Activated CD4-positive, alpha-beta memory T cell treated with anti-CD3 and anti-CD28 coated beads, Interleukin-2, amount 10 ng/mL, durations not matched to agents 7 days and 5 days (primary cell): ENCODE measurements at regions of chr13 and their contacts with region 1.

Region 1: DNA sequence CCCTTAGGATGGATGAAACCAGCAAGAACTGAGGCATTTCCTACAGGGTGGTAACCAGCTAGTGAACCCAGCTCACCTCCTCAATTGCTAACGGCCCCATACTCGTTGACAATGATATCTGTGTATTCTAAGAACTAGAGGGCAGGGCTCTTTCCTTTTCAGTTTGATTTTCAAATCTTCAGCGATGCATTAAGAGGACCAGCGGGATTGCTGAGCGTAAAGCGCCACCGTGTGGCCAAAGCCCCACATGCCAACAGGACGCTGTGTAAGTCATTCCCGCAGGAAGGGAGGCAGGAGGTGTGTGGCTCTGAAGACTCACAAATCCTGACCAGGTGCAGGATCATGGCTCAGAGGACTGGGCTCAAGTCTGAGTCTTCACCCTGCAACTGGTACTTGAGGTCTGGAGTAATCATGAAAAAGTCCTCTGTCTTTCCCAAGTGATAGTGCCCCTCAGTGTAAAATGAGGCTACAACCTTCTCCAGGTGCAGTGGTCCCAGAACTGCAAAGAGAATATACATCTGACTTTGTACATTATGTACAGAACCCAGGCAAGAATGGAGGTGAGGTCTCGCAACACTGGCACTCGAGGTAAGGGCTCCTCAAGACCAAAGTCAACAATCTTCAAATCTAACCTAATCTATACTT is 40.9 kb downstream of the C13orf42 start:
- DNase-seq: peak; percentile 84
- H3K4me3 Mint-ChIP-seq: no peak overlapping the region
- H3K27ac Mint-ChIP-seq: peak overlapping the region; percentile 70
- H3K4me1 Mint-ChIP-seq: peaks cover 52% of the 10 kb centered on the region
- H3K27me3 Mint-ChIP-seq: peaks cover 16% of the 10 kb centered on the region

Region 2: GRCh38 chr13:50893211-50893852 is 176.8 kb before region 1 on chr13:
- CTCF ChIA-PET with region 1: interaction called, 17 read pairs
- POLR2A ChIA-PET with region 1: interaction called, 4 read pairs
- DNase-seq: peak; percentile 45
- H3K4me3 Mint-ChIP-seq: peak overlapping the region; percentile 69
- H3K27ac Mint-ChIP-seq: peak overlapping the region; percentile 96
- H3K4me1 Mint-ChIP-seq: peaks cover 47% of the 10 kb centered on the region
- H3K27me3 Mint-ChIP-seq: peaks cover 2% of the 10 kb centered on the region

Region 3: DNA sequence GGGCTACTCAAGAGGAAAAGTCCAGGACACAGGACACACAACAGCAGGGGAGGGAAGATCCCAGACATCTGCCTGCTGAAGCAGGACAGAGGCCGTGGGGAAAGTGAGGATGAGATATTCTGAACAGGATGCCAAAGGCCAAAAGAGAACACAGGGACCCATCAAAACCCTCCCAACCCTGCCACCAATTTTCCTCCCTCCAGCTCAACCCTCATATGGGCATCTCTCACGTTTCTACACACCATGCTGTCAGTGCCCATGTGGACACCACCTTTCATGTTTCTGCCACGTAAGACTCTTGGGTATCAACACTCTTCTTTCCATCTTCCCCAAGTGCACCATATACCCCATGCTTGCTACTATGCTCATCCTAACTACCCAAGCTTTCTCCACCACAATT is 62.9 kb before region 1 on chr13:
- CTCF ChIA-PET with region 1: no interaction called
- POLR2A ChIA-PET with region 1: no interaction called
- DNase-seq: no peak
- H3K4me3 Mint-ChIP-seq: no peak overlapping the region
- H3K27ac Mint-ChIP-seq: no peak overlapping the region
- H3K4me1 Mint-ChIP-seq: no peaks in the 10 kb centered on the region
- H3K27me3 Mint-ChIP-seq: peaks cover 9% of the 10 kb centered on the region

Region 4: DNA sequence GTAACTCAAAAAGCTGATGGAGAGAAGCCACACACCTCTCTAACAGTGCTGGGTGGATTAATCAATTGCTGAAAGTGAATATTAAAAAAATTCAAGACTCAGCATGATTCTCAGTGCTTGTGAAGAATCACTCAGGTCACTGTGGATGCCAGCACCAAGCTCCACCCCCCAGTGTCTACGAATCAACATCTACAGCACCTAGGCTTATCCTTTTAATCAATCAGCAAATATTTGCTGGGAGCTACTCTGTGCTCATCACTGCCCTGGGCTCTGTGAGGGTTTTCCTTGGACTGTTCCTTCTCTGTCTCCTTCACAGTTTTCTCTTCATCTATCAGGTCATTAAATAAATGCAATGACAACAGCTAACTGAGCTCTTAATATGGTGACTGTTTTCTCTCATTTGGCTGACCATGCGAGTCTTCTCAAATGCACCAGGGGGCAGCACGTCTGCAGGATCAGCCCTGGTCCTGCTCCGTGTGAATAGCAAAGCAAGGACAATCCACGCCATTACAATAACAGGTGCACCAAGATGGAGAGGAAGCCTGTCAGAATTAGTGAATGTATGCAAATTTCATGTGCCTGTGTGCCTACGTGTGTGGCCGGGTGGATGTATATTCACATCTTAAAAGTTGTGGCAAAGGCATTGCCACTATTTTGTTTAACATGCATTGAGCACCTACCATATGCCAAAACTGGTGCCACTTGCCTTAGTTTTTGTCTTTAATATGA is 55.5 kb after region 1 on chr13:
- CTCF ChIA-PET with region 1: interaction called, 15 read pairs
- POLR2A ChIA-PET with region 1: no interaction called
- DNase-seq: peak; percentile 60
- H3K4me3 Mint-ChIP-seq: no peak overlapping the region
- H3K27ac Mint-ChIP-seq: no peak overlapping the region
- H3K4me1 Mint-ChIP-seq: peaks cover 15% of the 10 kb centered on the region
- H3K27me3 Mint-ChIP-seq: peaks cover 27% of the 10 kb centered on the region

Region 5: DNA sequence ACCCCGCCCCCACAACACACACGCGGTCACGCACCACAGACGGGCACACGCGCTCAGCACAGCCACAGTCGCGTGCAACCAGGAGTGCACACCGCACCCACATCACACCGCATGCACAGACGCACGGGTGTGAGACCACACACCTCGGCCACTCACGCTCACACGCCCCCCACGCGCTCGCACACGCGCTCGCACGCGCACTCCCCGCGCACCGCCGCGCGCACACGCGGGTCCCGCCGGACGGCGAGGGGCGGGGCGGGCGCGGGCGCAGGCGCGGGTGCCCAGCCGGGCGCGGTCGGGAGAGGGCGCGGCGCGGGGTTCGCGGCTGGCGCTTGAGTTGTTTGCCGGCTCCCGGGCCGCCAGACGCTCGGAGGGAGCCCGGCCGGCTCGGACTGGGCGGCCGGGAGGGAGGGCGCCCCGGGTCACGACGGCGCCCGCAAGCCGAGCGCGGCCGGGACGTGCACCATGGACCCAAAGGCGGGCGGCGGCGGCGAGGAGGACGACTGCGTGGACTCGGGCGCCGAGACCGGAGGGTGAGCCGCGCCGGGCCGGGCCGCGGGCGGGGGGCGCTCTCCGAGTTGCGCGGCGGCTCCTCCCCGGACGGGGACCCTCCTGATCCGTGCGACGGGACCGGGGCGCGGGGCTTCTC is 152.0 kb after region 1 on chr13 and contains the start of gene FAM124A:
- CTCF ChIA-PET with region 1: no interaction called
- POLR2A ChIA-PET with region 1: no interaction called
- DNase-seq: peak; percentile 49
- H3K4me3 Mint-ChIP-seq: peak within 1 kb of the TSS; percentile 63
- H3K27ac Mint-ChIP-seq: no peak within 1 kb of the TSS
- H3K4me1 Mint-ChIP-seq: peaks cover 5% of the 10 kb centered on the region
- H3K27me3 Mint-ChIP-seq: peaks cover 63% of the 10 kb centered on the region
- total RNA-seq, gene FAM124A: 0.08 to 0.10 TPM